Transverse colon (tissue), 4 donors: ENCODE measurements at regions of chr9 and their contacts with region 1.

Region 1: GRCh38 chr9:25025156-25025555 is 479.5 kb upstream of the IZUMO3 start:
- DNase-seq: no peak
- H3K4me3 ChIP-seq: no peak overlapping the region
- H3K27ac ChIP-seq: no peak overlapping the region
- H3K4me1 ChIP-seq: no peaks in the 10 kb centered on the region
- H3K27me3 ChIP-seq: no peaks in the 10 kb centered on the region
- CTCF ChIP-seq: no peak
- EP300 ChIP-seq: no peak
- POLR2A ChIP-seq: no peak

Region 2: DNA sequence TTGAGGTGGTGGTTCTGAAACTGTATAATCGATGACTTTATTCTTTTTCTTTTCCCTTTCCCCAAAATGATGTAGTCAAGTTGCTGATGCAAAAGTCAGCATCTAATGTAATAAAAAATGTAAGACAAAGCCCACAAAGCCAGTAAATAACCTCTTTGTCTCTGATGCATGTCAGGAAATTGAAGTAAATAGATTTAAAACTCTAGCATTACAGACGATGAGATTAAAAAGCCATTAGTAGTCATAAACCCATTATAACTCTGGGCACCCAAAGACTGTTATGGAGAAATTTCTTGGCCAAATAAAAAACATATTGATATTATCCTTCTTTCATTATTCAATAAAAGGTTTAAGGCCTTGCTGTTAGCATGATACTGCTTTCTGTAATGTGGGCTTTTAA is 104.4 kb after region 1 on chr9:
- in situ Hi-C with region 1: loop called in 1 of 4 experiments (anchors 25 kb)
- intact Hi-C with region 1: no loop called
- DNase-seq: no peak
- H3K4me3 ChIP-seq: no peak overlapping the region
- H3K27ac ChIP-seq: no peak overlapping the region
- H3K4me1 ChIP-seq: no peaks in the 10 kb centered on the region
- H3K27me3 ChIP-seq: no peaks in the 10 kb centered on the region
- CTCF ChIP-seq: no peak
- EP300 ChIP-seq: no peak
- POLR2A ChIP-seq: no peak